Ovary (tissue), 10 donors: ENCODE measurements at regions of chr12 and their contacts with region 1.

Region 1: DNA sequence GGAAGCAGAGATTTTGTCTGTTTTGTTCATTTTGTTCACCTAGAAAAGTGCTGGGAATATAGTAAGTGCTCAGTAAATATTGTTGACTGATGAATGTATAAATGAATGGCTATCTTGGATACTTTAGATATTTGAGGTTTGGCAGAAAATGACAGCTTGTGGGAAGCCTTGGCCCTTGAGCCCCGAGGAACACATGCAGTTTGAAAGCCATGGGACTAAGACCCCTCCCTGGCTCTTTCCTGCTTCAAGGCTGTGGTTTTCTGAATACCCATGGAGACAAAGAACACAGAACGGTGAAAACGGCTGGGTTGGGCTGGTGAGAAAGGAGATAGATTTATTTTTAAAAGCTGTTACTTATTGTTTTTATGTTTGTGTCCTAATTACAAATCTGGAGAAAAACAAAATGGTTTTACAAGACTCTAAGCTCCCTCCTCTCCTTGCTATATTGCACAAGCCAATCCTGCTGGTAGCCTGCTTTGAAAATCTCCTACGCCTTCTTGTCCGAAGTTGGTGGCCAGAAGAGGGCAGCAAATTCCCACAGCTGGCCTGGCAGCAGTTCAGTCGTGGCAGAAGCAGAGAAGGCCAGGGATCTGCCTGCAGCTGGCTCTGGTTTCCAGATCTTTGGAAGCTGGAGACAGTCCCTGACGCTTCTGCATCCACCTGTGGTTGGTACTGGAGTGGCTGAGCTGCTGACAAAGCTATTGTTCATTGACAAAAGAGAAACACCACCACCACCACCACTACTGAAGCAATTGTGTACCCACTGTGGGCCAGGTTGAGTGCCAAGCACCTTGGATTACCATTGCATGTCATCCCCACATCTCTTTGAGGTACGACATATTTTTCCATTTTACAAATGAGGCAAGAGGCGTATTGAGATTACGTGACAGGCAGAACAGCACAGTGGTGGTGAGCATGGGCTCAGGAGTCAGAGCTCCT is 5.2 kb upstream of the KRT85 start:
- DNase-seq: peak; percentile 56 to 84 (median 64)
- H3K4me3 ChIP-seq: no peak overlapping the region
- H3K27ac ChIP-seq: no peak overlapping the region
- H3K4me1 ChIP-seq: peaks cover 7% of the 10 kb centered on the region
- H3K27me3 ChIP-seq: no peaks in the 10 kb centered on the region
- CTCF ChIP-seq: peak in 1 of 3 donors; percentile 59
- EP300 ChIP-seq: no peak
- POLR2A ChIP-seq: no peak

Region 2: GRCh38 chr12:52879394-52880351 is 507.2 kb after region 1 on chr12:
- intact Hi-C with region 1: loop called in 2 of 4 experiments (anchors 5 kb)
- DNase-seq: peak; percentile 68 to 80 (median 77)
- H3K4me3 ChIP-seq: no peak overlapping the region
- H3K27ac ChIP-seq: no peak overlapping the region
- H3K4me1 ChIP-seq: peaks cover 4% of the 10 kb centered on the region
- H3K27me3 ChIP-seq: no peaks in the 10 kb centered on the region
- CTCF ChIP-seq: peak; percentile 71 to 76 (median 74)
- EP300 ChIP-seq: no peak
- POLR2A ChIP-seq: no peak